ENCODE measurements at regions of chr1 and their contacts with region 1.

Region 1: GRCh38 chr1:230140221-230141020 is 73.4 kb downstream of the GALNT2 start:
- DNase-seq: no peak
- ATAC-seq: no peak
- H3K4me3 Mint-ChIP-seq: no peak overlapping the region
- H3K27ac Mint-ChIP-seq: no peak overlapping the region
- H3K4me1 Mint-ChIP-seq: peaks cover 40% of the 10 kb centered on the region
- H3K27me3 Mint-ChIP-seq: no peaks in the 10 kb centered on the region
- CTCF ChIP-seq: no peak

Region 2: GRCh38 chr1:230205719-230206198 is 65.3 kb after region 1 on chr1:
- CTCF ChIA-PET with region 1: no interaction called
- POLR2A ChIA-PET with region 1: interaction called, 15 read pairs
- intact Hi-C with region 1: no loop called
- DNase-seq: no peak
- ATAC-seq: no peak
- H3K4me3 Mint-ChIP-seq: no peak overlapping the region
- H3K27ac Mint-ChIP-seq: no peak overlapping the region
- H3K4me1 Mint-ChIP-seq: peaks cover 40% of the 10 kb centered on the region
- H3K27me3 Mint-ChIP-seq: no peaks in the 10 kb centered on the region
- CTCF ChIP-seq: no peak

Region 3: GRCh38 chr1:230797942-230798418 is 657.6 kb after region 1 on chr1:
- CTCF ChIA-PET with region 1: no interaction called
- POLR2A ChIA-PET with region 1: no interaction called
- intact Hi-C with region 1: no loop called
- DNase-seq: no peak
- ATAC-seq: no peak
- H3K4me3 Mint-ChIP-seq: no peak overlapping the region
- H3K27ac Mint-ChIP-seq: no peak overlapping the region
- H3K4me1 Mint-ChIP-seq: no peaks in the 10 kb centered on the region
- H3K27me3 Mint-ChIP-seq: peaks cover 21% of the 10 kb centered on the region
- CTCF ChIP-seq: no peak

Measured in activated B cell treated with CpG ODN at 0.5 μM for 24 hours (primary cell).